ENCODE measurements at regions of chr9 and their contacts with region 1.

Region 1: DNA sequence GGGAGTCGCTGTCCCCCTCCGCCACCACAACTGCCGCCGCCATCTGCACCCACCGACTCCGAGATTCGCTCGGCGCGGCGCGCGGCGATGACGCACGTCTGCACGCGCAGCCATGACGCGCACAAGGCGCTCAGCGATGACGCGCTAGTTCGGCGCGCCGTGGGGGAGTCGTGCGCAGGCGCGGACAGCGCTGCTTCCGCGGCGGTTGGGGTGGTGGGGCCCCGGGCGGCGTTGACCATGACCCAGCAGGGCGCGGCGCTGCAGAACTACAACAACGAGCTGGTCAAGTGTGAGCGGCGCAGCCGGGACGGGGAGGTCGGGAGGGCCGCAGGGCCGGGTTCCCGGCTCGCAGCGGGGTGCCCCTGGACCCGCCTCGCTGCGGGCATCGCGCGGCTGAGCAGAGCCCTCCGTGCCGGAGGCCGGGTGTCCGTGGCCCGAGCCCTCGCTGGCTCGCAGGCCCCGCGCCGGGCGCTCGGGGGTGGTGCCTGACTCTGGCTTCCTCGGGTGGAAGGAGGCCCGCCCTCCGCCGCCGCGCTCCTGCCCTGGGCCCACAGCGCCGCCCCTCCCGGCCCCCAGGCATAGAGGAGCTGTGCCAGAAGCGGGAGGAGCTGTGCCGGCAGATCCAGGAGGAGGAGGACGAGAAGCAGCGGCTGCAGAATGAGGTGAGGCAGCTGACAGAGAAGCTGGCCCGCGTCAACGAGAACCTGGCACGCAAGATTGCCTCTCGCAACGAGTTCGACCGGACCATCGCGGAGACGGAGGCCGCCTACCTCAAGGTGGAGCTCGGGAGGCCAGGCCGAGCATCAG is at the starts of genes ANAPC2 and SSNA1:
- DNase-seq: peak; percentile 93
- ATAC-seq: peak; percentile 81
- H3K4me3 Mint-ChIP-seq: peak within 1 kb of the TSS; percentile 97
- H3K27ac Mint-ChIP-seq: peak within 1 kb of the TSS; percentile 97
- H3K4me1 Mint-ChIP-seq: peaks cover 42% of the 10 kb centered on the region
- H3K27me3 Mint-ChIP-seq: no peaks in the 10 kb centered on the region
- total RNA-seq, gene ANAPC2: 60.2 to 64.1 TPM
- total RNA-seq, gene SSNA1: 88.2 to 90.0 TPM

Region 2: GRCh38 chr9:136949817-136950655 is 238.7 kb before region 1 on chr9:
- CTCF ChIA-PET with region 1: no interaction called
- POLR2A ChIA-PET with region 1: no interaction called
- DNase-seq: peak; percentile 98
- ATAC-seq: peak; percentile 97
- H3K4me3 Mint-ChIP-seq: peak overlapping the region; percentile 84
- H3K27ac Mint-ChIP-seq: peak overlapping the region; percentile 90
- H3K4me1 Mint-ChIP-seq: peaks cover 17% of the 10 kb centered on the region
- H3K27me3 Mint-ChIP-seq: no peaks in the 10 kb centered on the region

Region 3: GRCh38 chr9:137052293-137052692 is 136.4 kb before region 1 on chr9:
- CTCF ChIA-PET with region 1: no interaction called
- POLR2A ChIA-PET with region 1: no interaction called
- DNase-seq: no peak
- ATAC-seq: no peak
- H3K4me3 Mint-ChIP-seq: no peak overlapping the region
- H3K27ac Mint-ChIP-seq: no peak overlapping the region
- H3K4me1 Mint-ChIP-seq: no peaks in the 10 kb centered on the region
- H3K27me3 Mint-ChIP-seq: peaks cover 34% of the 10 kb centered on the region

Region 4: DNA sequence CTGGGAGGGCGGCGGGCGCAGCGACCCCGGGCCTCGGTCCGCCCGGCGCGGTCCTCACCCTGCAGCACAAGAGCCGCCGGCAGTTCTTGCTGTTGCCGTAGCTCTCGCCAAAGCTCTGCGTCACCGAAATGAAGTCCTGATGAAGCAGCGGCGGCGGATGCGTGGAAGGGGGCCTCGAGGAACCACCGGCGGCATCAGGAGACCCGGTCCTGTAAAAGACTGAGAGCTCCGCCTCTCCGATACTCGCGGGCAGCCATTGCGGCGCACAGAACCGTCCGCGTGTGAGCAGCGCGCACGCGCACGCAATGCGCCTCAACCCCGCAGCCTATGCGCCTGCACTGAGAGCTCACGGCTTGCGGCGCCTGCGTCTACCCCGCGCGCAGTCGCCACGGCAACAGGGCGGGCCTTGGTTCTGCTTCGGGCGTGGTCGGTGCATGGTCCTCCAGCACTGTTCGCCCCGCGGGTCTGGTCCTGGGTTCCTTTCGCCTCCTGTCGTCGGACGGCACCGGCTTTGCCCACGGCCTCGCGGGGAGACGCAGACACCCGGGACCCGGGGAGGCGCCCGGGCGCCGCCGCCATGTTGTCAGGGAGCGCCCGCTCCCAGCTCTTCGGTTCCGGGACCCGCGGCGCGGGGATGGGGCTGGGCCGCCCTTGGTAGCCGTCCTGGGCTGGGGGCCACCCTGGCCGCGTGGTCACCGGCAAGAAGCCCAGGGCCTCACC is 59.1 kb before region 1 on chr9:
- CTCF ChIA-PET with region 1: interaction called, 3 read pairs
- POLR2A ChIA-PET with region 1: interaction called, 11 read pairs
- DNase-seq: peak; percentile 93
- ATAC-seq: peak; percentile 95
- H3K4me3 Mint-ChIP-seq: peak overlapping the region; percentile 83
- H3K27ac Mint-ChIP-seq: peak overlapping the region; percentile 82
- H3K4me1 Mint-ChIP-seq: peaks cover 31% of the 10 kb centered on the region
- H3K27me3 Mint-ChIP-seq: peaks cover 7% of the 10 kb centered on the region

Region 5: DNA sequence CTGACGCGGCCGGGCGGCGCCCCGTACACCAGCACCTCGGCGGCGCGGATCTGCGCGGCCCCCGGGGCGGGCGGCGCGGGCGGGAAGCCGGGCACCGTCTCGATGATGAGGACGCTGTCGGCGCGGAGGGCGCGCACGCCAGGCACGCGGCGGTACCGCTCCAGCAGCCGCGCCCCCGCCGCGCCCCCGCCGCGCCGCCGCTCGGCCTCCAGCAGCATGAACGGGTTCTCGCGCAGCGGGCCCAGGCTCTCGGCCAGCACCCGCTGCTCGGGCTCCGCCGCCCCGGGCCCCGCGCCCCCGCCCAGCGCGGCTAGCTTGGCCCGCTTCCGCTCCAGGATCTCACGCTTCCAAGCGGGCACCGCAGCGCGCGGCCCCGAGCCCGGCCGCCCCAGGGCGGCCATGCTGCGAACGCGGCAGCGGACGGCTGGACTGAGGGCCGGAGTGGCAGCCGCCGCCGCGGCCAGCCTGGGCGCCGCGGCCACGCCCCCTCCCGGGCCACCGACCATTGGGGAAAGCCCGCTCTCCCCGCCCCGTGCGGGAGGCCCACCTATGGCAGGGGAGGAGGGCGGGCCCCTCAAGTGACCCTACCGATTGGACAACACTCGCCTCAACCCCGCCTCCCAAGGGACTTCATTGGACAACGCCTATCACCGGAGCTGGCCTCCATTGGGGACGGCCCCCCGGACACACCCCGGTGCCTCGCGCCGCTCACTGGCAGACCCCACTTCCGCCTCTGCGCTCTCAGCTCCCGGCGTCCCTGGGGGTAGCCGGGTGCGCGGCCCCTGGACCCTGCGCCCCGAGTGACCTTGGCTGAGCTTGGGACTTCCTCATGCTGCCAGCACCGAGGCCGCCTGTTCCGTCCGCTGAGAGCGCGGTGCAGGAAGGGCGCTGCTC is 11.9 kb after region 1 on chr9 and contains the start of gene TPRN:
- CTCF ChIA-PET with region 1: interaction called, 12 read pairs
- POLR2A ChIA-PET with region 1: interaction called, 27 read pairs
- DNase-seq: peak; percentile 99
- ATAC-seq: peak; percentile 97
- H3K4me3 Mint-ChIP-seq: peak within 1 kb of the TSS; percentile 86
- H3K27ac Mint-ChIP-seq: peak within 1 kb of the TSS; percentile 86
- H3K4me1 Mint-ChIP-seq: peaks cover 39% of the 10 kb centered on the region
- H3K27me3 Mint-ChIP-seq: no peaks in the 10 kb centered on the region
- total RNA-seq, gene TPRN: 10.9 to 12.0 TPM

Measured in activated CD8-positive, alpha-beta T cell treated with anti-CD3 and anti-CD28 coated beads, Interleukin-2, amount 10 ng/mL, durations not matched to agents 7 days and 5 days (primary cell).